Breast epithelium (tissue), 4 donors: ENCODE measurements at regions of chr15 and their contacts with region 1.

Region 1: DNA sequence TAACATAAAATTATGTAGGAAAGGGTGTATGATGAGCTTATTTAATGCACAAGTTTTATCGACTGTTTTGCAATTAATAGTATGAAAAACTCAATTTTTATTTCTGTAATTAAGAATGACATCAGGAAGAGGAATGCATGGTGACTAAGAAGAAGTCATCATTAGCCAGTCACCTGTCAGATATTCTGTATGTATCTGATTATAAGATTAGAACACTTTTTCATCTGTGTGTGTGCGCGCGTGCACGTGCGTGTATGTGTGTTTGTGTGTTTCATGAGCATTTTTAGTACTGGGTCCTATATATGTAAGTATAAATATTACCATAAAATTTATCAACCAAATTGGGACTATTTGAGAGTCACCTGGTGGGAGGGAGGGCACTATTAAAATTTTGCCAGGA is 5.0 kb upstream of the ABHD2 start:
- DNase-seq: no peak
- H3K4me3 ChIP-seq: no peak overlapping the region
- H3K27ac ChIP-seq: no peak overlapping the region
- H3K4me1 ChIP-seq: no peaks in the 10 kb centered on the region
- H3K27me3 ChIP-seq: no peaks in the 10 kb centered on the region
- CTCF ChIP-seq: no peak
- POLR2A ChIP-seq: no peak

Region 2: DNA sequence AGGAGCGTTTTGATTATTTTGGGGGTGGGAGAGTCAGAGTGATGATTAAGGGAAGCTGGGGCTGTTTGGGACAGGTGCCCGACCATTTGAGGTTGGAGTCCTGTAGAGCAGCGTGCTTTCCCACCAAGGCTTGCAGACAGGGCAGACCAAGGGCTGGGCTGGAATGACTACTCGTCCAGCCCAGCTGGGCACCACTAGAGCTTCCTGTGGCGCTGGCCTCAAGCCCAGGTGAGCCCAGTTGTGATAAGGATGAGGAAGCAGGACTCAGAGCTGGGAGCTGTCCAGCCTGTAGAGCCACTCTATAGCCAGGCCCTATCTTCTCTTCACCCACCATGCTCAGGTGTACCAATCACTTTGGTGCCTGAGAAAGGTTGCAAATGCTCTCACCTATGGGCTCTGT is 355.8 kb before region 1 on chr15:
- intact Hi-C with region 1: no loop called
- DNase-seq: no peak
- H3K4me3 ChIP-seq: no peak overlapping the region
- H3K27ac ChIP-seq: no peak overlapping the region
- H3K4me1 ChIP-seq: no peaks in the 10 kb centered on the region
- H3K27me3 ChIP-seq: no peaks in the 10 kb centered on the region
- CTCF ChIP-seq: no peak
- POLR2A ChIP-seq: no peak

Region 3: DNA sequence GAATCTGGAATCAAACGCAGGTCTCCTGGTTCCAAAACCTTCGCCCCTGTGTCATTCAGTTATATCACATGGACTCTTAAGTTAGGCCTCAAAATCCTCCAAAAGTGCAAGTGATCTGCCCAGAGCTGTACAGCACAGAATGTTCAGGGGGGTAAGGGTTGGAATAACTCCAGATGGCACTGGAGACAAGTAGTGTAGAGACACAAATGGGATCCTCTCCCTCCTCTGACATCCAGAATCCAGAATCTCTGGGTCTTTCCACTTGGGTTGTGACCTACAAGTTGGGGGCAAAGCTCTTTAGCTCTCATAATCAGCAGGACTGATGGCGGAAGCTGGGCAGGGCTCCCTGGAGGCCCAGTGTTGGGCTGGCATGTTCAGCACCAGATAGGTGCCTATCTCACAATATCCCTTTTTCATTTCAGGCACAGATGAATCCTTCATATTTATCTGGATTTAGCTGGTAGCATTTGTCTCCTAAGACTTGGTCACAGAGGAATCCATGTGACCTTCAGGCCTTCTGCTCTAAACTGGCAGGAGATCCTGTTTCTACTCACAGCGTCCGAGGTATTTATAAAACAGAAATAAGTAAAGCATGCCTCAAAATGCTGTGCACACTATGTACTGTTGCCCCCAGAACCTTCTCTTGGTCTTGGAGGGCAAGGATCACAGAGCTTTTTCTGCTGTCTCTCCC is 20.4 kb after region 1 on chr15:
- intact Hi-C with region 1: loop called (anchors 1 kb)
- DNase-seq: no peak
- H3K4me3 ChIP-seq: no peak overlapping the region
- H3K27ac ChIP-seq: peak overlapping the region; percentile 37 to 45
- H3K4me1 ChIP-seq: peaks cover 0 to 22% of the 10 kb centered on the region in 2 donors
- H3K27me3 ChIP-seq: no peaks in the 10 kb centered on the region
- CTCF ChIP-seq: no peak
- POLR2A ChIP-seq: no peak

Region 4: GRCh38 chr15:89750560-89751542 is 667.6 kb after region 1 on chr15 and contains the start of gene MESP1:
- intact Hi-C with region 1: no loop called
- DNase-seq: peak; percentile 83 to 87
- H3K4me3 ChIP-seq: peak within 1 kb of the TSS; percentile 66 to 86 (median 66)
- H3K27ac ChIP-seq: peak within 1 kb of the TSS; percentile 84
- H3K4me1 ChIP-seq: peaks cover 0 to 13% of the 10 kb centered on the region in 2 donors
- H3K27me3 ChIP-seq: no peaks in the 10 kb centered on the region
- CTCF ChIP-seq: peak; percentile 74 to 92 (median 82)
- POLR2A ChIP-seq: no peak
- total RNA-seq, gene MESP1: 5.9 to 12.8 (median 6.2) TPM